ENCODE measurements at regions of chr12 and their contacts with region 1.

Region 1: GRCh38 chr12:4526923-4527546 is 11.7 kb upstream of the RAD51AP1 start:
- DNase-seq: no peak
- ATAC-seq: no peak
- H3K4me3 ChIP-seq: no peak overlapping the region
- H3K27ac ChIP-seq: no peak overlapping the region
- H3K4me1 ChIP-seq: no peaks in the 10 kb centered on the region
- H3K27me3 ChIP-seq: no peaks in the 10 kb centered on the region
- CTCF ChIP-seq: peak; percentile 42 to 79 (median 68)

Region 2: DNA sequence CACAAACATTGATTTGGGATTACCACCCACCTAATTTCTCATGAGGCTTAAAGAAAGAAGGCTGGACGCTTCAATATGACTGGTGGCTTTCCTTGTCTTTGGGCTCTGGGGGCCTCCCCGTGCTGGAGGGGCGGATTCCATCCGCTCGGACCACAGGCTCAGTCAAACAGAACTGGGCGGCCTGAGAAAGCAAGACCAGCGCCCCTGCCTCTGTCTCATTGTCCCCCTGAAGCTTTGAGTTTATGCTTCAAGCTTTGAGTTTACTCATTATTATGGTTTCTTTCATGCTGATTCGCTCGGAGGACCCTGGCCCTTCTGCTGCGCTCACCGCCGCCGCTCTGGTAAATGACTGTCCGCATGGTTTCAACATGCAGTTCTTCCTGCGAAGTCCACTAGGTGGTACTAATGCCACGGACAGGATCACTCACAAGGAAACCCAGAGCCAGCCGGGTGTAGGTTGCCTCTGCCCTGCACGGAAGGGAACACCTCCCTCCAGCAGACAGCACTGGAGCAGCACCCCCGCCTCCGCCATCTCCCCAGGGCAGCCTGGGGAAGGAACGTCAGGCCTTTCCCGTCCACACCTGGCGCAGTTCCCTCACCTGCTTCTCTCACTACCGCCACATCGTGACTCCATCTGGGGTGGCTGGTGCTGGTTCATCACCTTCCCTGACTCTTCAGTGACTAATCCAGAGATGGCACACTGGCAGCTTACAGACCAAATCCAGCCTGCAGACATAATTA is 219.3 kb before region 1 on chr12:
- intact Hi-C with region 1: loop called in 2 of 10 experiments (anchors 5 kb)
- DNase-seq: peak; percentile 52 to 70
- ATAC-seq: peak; percentile 81 to 90 (median 86)
- H3K4me3 ChIP-seq: peak overlapping the region in 4 of 10 donors; percentile 18 to 29 (median 26)
- H3K27ac ChIP-seq: peak overlapping the region in 8 of 10 donors; percentile 27 to 67 (median 40)
- H3K4me1 ChIP-seq: peaks cover 8 to 59% (median 31%) of the 10 kb centered on the region in 9 donors
- H3K27me3 ChIP-seq: no peaks in the 10 kb centered on the region
- CTCF ChIP-seq: peak; percentile 44 to 82 (median 70)

Region 3: GRCh38 chr12:4356041-4356327 is 171.1 kb before region 1 on chr12:
- intact Hi-C with region 1: loop called in 9 of 10 experiments (anchors 2 to 10 kb)
- DNase-seq: peak; percentile 21 to 31
- ATAC-seq: peak in 5 of 8 donors; percentile 20 to 47 (median 32)
- H3K4me3 ChIP-seq: no peak overlapping the region
- H3K27ac ChIP-seq: peak overlapping the region in 1 of 10 donors; percentile 45
- H3K4me1 ChIP-seq: peaks cover 0 to 11% (median 7%) of the 10 kb centered on the region in 9 donors
- H3K27me3 ChIP-seq: no peaks in the 10 kb centered on the region
- CTCF ChIP-seq: peak in 7 of 9 donors; percentile 37 to 54 (median 43)

Measured in heart right ventricle (tissue), 16 donors.